ENCODE measurements at regions of chr12 and their contacts with region 1.

Region 1: DNA sequence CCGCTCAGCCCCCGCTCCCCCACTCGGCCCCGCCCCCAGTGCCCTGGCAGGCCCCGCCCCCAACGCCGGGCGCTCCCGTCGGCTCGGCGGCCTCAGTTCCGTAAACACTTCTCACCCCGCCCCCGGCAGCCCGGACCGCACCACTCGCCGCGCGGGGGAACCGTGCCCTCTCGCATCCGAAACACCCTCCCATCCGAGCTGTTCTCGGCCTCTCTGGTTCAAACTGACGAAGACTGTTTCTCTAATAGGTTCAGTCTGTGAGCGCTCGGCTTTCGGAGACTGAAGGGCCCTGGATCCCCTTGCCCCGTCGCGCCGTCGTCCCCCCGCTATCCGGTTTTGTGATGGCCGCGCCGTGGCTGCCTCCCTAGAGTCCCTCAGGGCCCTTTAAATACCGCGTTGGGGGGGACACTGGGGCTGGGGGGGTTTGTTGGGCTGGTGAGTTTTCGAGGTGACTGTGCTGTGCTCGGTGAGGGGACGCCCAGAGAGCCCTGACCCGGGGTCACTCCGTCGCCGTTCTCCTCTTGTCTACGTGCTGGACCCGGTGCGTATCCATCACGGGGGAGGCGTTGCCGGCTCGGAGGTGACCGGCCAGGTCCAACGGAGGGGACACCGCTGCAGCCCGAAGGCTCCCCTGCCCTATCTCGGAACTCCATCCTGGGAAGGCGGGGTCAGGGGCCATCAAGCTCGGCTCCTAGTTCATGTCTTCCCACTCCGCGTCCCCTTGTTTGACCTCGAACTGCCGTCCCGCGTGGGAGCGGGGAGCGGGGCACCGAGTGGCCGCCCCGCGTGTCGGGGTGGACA is at the start of gene TCP11L2:
- DNase-seq: peak; percentile 93
- H3K4me3 ChIP-seq: peak within 1 kb of the TSS; percentile 60 to 98 (median 92)
- H3K27ac ChIP-seq: peak within 1 kb of the TSS; percentile 83 to 98 (median 95)
- H3K4me1 ChIP-seq: peaks cover 0 to 54% (median 51%) of the 10 kb centered on the region in 4 donors
- H3K27me3 ChIP-seq: no peaks in the 10 kb centered on the region
- CTCF ChIP-seq: no peak
- EP300 ChIP-seq: no peak
- POLR2A ChIP-seq: peak in 1 of 2 donors; percentile 25
- total RNA-seq, gene TCP11L2: 38.4 to 53.5 (median 49.3) TPM

Region 2: DNA sequence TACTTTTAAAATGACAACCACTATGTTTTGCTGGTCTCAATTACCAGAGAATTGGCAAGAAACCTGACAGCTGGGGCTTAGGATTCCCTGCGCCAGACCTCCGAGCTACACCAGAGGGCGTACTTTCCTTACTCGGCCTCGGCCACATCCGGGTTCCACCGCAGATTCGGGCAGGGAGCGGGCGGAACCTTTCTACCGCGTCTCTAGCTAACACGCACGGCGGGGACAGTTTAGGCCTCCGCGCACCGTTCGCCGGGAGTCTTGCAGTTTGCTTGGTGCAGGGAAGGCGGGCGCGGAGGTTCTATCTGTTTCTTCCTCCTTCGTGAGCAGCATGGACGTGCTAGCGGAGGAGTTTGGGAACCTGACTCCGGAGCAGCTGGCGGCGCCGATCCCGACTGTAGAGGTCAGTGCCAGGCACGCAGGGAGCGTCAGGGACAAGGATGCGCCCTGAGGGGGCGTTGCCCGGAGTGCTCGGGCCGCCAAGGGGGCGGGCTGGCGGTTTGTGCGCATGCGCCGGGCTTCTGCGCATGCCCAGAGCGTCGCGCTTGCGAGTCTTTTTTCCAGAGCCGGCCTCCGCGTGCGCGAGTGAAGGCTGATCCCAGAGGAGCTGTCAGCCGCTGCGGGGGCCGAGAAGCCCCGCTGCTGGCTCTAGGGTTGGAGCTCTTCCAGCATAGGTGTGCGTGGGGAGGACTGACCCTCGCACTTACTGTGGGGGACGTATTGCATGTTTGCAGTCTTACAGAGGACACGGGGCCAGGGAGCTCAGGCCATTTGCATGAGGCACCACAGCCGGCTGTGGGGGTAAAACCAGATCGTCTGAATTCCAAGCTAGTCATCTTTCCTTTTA is 55.2 kb after region 1 on chr12 and contains the start of gene POLR3B:
- intact Hi-C with region 1: loop called (anchors 5 kb)
- DNase-seq: peak; percentile 98
- H3K4me3 ChIP-seq: peak within 1 kb of the TSS; percentile 57 to 84 (median 76)
- H3K27ac ChIP-seq: peak within 1 kb of the TSS; percentile 93 to 96 (median 94)
- H3K4me1 ChIP-seq: peaks cover 0 to 15% (median 14%) of the 10 kb centered on the region in 4 donors
- H3K27me3 ChIP-seq: no peaks in the 10 kb centered on the region
- CTCF ChIP-seq: peak; percentile 81 to 88 (median 83)
- EP300 ChIP-seq: no peak
- POLR2A ChIP-seq: peak; percentile 70 to 79
- total RNA-seq, gene POLR3B: 3.9 to 5.4 (median 4.8) TPM

Region 3: DNA sequence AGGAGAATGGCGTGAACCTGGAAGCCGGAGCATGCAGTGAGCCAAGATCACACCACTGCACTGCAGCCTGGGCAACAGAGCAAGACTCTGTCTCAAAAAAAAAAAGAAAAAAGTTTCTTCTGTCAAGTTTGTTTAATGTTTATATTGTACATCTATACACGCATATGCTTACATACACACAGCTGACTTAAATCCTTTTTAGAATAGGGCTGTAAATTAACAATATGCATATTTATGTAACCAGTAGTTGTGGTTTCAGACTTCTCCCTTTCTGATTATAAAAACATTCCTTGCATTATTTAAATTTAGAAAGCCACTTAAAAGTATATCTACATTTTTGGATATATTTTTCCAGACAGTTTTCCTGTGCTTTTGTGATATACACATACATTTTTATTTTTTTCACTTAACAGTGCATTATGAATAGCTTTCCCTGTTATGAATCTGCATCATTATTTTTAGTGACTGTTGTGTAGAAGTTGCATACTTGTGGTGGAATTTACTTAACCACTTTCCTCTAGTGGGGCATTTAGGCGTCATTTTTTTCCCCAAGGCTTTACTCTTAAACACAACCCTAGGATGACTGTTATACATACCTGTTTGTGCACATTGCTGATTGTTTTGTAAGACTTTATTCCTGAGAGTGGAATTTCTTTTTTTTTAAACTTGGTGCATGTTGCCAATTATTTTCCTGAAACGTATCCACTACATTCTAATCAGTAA is 84.4 kb after region 1 on chr12:
- intact Hi-C with region 1: no loop called
- DNase-seq: no peak
- H3K4me3 ChIP-seq: no peak overlapping the region
- H3K27ac ChIP-seq: no peak overlapping the region
- H3K4me1 ChIP-seq: peaks cover 0 to 5% (median 0%) of the 10 kb centered on the region in 4 donors
- H3K27me3 ChIP-seq: no peaks in the 10 kb centered on the region
- CTCF ChIP-seq: no peak
- EP300 ChIP-seq: no peak
- POLR2A ChIP-seq: no peak

Region 4: DNA sequence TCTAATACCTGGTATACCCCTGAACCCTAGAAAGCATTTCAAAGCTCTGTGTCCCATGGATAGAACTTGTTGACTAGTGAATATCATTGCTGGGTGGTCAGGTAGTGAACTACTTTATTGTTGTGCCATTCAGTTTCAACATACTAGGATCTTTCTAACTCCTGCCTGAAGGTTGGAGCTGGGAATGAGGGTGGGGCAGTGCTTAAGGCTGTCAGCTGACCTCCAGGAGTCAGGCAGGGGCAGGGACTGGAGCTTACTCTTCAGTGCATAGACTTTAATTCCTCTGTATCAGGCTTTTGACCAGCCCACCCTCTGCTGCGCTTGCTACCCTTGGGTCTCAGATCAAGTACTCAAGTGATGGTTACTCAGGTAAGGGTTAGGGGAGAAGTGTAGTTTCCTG is 177.7 kb after region 1 on chr12:
- intact Hi-C with region 1: no loop called
- DNase-seq: no peak
- H3K4me3 ChIP-seq: no peak overlapping the region
- H3K27ac ChIP-seq: no peak overlapping the region
- H3K4me1 ChIP-seq: peaks cover 0 to 6% (median 0%) of the 10 kb centered on the region in 4 donors
- H3K27me3 ChIP-seq: no peaks in the 10 kb centered on the region
- CTCF ChIP-seq: no peak
- EP300 ChIP-seq: no peak
- POLR2A ChIP-seq: no peak

Region 5: DNA sequence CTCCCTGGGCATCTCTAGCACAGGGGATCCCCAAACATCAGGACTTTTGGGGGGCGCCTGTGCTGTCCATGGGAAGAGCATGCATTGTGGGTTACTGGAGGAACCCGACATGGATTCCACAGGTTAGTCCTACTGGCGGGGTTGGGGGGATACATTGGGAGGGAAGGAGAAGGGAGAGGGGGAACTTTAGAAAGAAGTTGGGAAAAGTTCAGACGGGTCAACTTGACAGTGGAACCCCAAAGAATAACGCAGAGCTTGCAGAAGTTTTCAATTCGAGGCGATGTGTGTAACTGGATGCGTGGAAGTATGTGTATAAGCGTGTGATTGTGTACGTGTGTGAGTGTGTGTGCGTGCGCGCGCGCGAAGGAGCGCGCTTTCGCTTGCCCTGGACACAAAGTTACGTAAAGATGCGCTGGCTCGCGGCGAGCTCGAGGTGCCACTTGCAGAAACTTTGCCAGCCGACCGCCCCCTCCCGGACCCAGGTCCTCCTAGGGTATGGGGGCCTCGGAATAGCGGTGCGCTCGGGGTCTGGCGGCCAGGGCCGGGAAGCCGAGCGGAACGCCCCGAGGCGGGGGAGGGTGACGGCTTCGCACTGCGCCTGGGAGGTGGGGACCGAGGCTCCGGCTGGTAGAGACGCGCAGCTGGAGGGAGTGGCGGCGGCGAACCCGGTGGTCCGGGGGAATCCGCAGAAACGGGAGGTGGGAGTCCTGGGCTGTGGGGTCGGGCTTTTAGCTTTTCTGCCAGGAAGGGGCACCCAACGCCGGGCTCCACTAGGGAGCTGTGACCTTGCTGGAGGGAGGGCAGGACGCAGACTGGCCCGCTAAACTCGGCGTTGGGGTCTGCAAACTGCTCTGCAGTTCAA is 280.9 kb after region 1 on chr12:
- intact Hi-C with region 1: no loop called
- DNase-seq: no peak
- H3K4me3 ChIP-seq: peak overlapping the region in 3 of 4 donors; percentile 19 to 41 (median 38)
- H3K27ac ChIP-seq: no peak overlapping the region
- H3K4me1 ChIP-seq: peaks cover 0 to 68% (median 56%) of the 10 kb centered on the region in 4 donors
- H3K27me3 ChIP-seq: peaks cover 42 to 100% (median 99%) of the 10 kb centered on the region in 3 donors
- CTCF ChIP-seq: no peak
- EP300 ChIP-seq: no peak
- POLR2A ChIP-seq: no peak

Measured in sigmoid colon (tissue), 7 donors.